Activated naive CD4-positive, alpha-beta T cell treated with anti-CD3 and anti-CD28 coated beads, Interleukin-2, amount 10 ng/mL, durations not matched to agents 7 days and 5 days (primary cell): ENCODE measurements at regions of chr7 and their contacts with region 1.

Region 1: DNA sequence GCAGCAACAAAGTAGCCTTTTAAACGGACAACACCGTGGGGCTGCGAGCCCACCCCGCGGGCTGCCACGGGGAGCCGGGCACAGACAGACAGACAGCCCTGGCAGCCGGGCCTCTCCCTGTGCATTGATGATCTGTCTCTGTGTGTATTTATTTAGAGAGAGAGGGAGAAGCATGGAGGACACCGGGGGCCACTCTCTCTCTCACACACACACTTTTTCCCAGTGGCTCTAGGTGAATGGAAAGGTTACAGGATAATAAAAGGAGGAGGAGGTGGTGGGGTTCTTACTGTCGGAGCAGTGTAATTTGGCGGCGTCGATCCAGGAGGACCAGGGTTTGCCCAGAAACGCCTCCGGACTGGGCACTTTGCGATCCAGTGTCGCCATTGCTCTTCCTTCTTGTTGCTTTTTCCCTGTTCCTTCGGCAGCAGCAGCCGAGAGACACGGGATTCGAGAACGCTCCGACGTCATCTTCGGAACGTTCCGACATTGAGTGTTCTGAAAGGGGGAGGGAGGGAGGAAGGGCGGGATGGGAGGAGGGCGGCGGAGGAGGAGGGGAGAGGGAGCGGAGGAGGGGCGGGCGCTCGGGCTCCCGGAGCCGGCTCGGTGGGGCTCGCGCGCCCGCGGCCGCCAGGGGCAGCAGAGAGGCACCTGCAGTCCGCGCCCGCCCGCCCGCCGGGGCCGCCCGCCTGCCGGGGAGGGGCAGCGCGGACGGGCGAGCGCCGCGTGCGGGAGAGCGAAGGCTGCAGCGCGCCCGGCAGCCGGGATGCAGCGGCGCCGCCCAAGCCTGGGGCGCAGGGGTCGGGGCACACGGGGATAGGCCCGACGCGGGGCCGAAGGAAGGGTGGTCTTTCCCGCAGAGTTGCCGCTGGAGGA is at the start of gene ATXN7L1:
- DNase-seq: peak; percentile 93
- H3K4me3 Mint-ChIP-seq: peak within 1 kb of the TSS; percentile 99
- H3K27ac Mint-ChIP-seq: peak within 1 kb of the TSS; percentile 86
- H3K4me1 Mint-ChIP-seq: peaks cover 41% of the 10 kb centered on the region
- H3K27me3 Mint-ChIP-seq: peaks cover 24% of the 10 kb centered on the region

Region 2: DNA sequence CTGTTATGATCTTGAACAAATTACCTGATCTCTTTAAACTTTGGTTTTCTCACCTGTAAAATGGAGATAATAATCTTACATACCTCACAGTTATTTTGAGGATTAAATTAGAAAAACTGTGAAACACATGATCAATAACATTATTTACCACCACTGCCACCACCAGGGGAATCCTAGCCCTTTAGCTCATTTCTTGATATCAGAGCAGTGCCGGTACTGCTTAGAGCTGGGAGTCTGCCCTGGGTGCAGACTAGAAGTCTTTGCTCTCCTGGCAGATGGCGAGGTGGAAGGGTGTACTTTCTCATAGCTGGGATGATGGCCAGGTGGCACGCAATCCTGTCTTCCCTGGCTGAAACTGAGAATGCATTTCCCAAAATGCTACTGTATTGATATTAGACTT is 282.3 kb before region 1 on chr7:
- CTCF ChIA-PET with region 1: no interaction called
- DNase-seq: no peak
- H3K4me3 Mint-ChIP-seq: no peak overlapping the region
- H3K27ac Mint-ChIP-seq: no peak overlapping the region
- H3K4me1 Mint-ChIP-seq: peaks cover 6% of the 10 kb centered on the region
- H3K27me3 Mint-ChIP-seq: peaks cover 31% of the 10 kb centered on the region

Region 3: DNA sequence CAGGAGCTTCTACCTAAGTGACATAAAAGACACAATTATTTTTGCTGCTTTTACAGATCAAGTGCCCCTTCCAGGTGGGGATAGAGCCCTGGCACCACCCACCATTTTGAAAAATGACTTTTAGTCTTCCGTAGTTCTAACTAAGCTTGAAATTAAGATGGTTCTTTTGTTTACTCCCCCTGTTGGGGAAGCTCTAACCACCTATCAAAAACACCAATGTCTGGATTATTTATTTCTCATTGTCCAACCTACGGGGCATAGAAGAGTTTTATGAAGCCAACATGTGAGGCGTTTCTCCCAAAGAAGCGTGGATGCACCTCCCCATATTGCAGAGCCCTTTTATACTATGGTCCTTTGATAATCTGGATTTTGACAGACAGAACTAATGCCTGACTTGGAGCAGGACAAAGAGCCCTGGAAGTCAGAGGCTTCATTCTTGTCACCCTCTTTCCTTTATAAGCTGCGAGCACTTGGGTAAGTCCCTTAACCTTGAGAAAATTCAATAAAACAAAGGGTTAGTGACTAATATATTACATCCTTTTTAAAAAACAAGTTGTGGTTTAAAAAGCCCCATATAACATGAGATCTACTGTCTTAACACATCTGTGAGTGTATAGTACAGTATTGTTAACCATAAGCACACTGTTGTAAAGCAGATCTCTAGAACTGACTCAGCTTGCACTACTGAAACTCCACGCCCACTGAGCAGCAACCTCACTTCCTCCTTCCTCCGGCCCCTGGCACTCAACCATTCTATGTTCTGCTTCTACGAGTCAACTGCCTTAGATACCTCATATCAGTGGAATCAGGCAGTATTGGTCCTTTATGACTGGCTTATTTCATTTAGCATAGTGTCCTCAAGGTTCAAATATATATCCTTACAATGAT is 67.4 kb before region 1 on chr7:
- CTCF ChIA-PET with region 1: interaction called, 18 read pairs
- DNase-seq: peak; percentile 87
- H3K4me3 Mint-ChIP-seq: peak overlapping the region; percentile 0
- H3K27ac Mint-ChIP-seq: peak overlapping the region; percentile 95
- H3K4me1 Mint-ChIP-seq: peaks cover 63% of the 10 kb centered on the region
- H3K27me3 Mint-ChIP-seq: peaks cover 6% of the 10 kb centered on the region

Region 4: DNA sequence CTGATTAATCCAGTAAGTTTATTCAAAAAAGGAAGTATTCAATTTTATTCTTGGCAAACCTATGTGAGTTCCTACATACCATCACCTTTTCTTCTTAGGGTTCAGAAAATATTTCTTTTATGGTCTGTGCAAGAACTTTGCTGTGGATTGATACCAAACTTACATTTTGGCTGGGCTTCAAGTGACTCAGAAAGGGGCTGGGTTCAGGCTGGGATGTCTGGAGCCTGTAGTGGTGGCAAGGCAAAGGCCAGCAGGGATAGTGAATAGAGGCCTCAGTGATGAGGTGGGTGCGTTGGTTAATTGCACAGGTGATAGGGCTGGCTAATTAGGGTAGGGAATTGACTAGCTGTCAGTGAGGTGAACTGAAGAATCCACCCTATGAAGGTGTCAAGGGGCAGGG is 40.3 kb after region 1 on chr7:
- CTCF ChIA-PET with region 1: no interaction called
- DNase-seq: no peak
- H3K4me3 Mint-ChIP-seq: no peak overlapping the region
- H3K27ac Mint-ChIP-seq: no peak overlapping the region
- H3K4me1 Mint-ChIP-seq: no peaks in the 10 kb centered on the region
- H3K27me3 Mint-ChIP-seq: no peaks in the 10 kb centered on the region